Common myeloid progenitor, CD34-positive (primary cell): ENCODE measurements at regions of chr4 and their contacts with region 1.

Region 1: GRCh38 chr4:39029752-39030694 is 2.2 kb downstream of the TMEM156 start:
- DNase-seq: peak in 1 of 3 donors; percentile 29
- H3K4me3 ChIP-seq: peak overlapping the region in 6 of 7 experiments; percentile 19 to 68 (median 52)
- H3K27ac ChIP-seq: peak overlapping the region; percentile 25 to 82
- H3K4me1 ChIP-seq: peaks cover 25 to 65% (median 52%) of the 10 kb centered on the region in 4 experiments
- H3K27me3 ChIP-seq: no peaks in the 10 kb centered on the region

Region 2: DNA sequence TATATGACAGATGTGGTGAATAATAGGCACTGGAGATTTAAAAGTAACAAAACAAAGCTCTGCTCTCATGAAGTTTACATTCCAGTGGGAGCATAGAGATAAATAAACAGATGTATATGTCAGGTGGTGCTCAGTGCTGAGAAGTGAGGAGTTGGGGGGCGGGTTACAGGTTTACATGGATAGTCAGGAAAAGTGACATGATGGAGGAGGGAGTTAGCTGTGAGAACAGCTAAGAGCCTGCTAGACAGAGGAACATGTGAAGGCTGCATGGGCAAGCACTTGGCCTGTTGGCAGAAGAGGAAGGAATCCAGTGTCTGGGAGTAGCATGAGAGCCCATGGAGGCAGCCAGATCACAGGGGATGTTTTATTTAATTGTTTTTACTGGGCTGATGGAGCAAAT is 12.3 kb after region 1 on chr4:
- CTCF ChIA-PET with region 1: interaction called, 14 read pairs
- POLR2A ChIA-PET with region 1: interaction called, 5 read pairs
- DNase-seq: peak in 1 of 3 donors; percentile 3
- H3K4me3 ChIP-seq: no peak overlapping the region
- H3K27ac ChIP-seq: no peak overlapping the region
- H3K4me1 ChIP-seq: peaks cover 11 to 38% (median 29%) of the 10 kb centered on the region in 4 experiments
- H3K27me3 ChIP-seq: no peaks in the 10 kb centered on the region